Breast epithelium (tissue), 4 donors: ENCODE measurements at regions of chr20 and their contacts with region 1.

Region 1: GRCh38 chr20:63196768-63197470 is 19.0 kb downstream of the YTHDF1 start:
- DNase-seq: no peak
- H3K4me3 ChIP-seq: no peak overlapping the region
- H3K27ac ChIP-seq: no peak overlapping the region
- H3K4me1 ChIP-seq: no peaks in the 10 kb centered on the region
- H3K27me3 ChIP-seq: no peaks in the 10 kb centered on the region
- CTCF ChIP-seq: no peak
- POLR2A ChIP-seq: no peak

Region 2: DNA sequence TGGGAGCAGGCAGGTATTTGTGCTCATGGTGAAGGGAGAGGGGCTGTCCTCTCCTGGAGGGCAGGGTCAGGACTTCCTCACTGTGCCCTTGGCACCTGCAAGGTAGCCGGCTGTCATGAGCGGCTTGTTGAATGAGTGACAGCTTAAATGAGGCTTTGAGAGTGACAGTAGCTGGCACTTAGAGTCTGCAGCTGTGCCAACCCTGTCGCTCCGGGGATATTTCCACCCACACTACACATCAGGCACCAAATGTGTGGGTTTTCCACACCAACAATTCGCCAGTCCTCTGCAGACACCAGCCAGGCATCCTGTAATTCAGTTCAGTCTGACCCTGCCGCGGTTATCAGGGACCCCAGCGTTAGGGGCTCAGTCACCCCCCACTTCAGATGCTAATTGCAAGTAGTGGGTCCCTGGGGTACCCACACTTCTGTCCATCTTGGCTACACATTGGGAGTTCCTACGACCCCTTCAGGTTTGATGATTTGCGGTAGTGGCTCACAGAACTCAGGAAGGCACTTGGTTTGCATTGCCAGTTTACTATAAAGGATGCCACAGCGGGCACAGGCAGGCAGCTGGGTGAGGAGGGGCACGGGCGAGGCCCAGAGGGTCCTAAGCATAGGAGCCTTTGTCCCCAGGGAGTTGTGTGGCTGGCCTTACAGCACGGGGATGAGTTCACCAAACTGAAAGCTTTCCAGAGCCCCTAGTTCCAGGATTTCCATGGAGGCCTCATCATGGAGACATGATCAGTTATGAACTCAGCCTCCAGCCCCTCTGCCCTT is 1004.9 kb before region 1 on chr20:
- intact Hi-C with region 1: loop called (anchors 5 kb)
- DNase-seq: no peak
- H3K4me3 ChIP-seq: no peak overlapping the region
- H3K27ac ChIP-seq: no peak overlapping the region
- H3K4me1 ChIP-seq: no peaks in the 10 kb centered on the region
- H3K27me3 ChIP-seq: no peaks in the 10 kb centered on the region
- CTCF ChIP-seq: no peak
- POLR2A ChIP-seq: no peak